ENCODE measurements at regions of chr1 and their contacts with region 1.

Region 1: DNA sequence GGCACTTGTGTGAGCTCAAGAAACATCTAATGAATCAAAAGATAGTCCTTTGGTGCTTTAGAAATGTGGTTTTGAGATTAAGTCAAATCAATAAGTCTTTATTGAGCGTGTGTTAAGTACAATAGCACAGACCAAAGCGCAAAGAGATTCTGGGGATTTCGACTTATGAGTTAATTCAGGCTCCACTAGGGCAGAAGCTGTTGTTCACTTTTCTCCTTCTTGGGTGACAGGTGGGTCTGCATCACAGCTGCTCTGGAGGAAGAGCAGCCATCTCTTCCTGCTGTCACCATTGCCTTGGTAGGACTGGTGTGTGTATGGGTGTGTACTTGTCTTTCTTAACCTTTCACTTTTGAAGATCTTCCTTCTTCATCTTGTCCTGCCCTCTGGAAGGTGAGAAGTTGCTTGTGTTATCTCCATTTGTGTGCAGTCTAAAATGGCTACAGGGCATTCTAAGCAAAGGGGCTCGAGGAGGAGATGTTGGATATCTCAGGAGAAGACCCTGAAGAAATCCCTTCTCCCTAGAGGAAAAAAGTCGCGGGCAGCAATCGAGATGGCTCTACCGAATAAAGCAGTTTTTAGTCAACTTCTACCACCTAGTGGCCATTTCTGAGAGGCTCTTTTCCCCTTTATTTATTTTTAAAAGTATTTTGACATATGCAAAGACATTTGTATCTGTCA is 22.9 kb upstream of the DISC1 start:
- DNase-seq: peak in 7 of 9 experiments; percentile 6 to 73 (median 36)
- ATAC-seq: peak; percentile 89
- H3K4me3 ChIP-seq: peak overlapping the region; percentile 62 to 74
- H3K4me3 Mint-ChIP-seq: peak overlapping the region; percentile 95
- H3K27ac ChIP-seq: peak overlapping the region; percentile 21 to 40
- H3K27ac Mint-ChIP-seq: peak overlapping the region; percentile 89
- H3K4me1 ChIP-seq: peaks cover 4% of the 10 kb centered on the region
- H3K4me1 Mint-ChIP-seq: peaks cover 8% of the 10 kb centered on the region
- H3K27me3 ChIP-seq: no peaks in the 10 kb centered on the region
- H3K27me3 Mint-ChIP-seq: no peaks in the 10 kb centered on the region
- CTCF ChIP-seq: peak; percentile 74

Region 2: DNA sequence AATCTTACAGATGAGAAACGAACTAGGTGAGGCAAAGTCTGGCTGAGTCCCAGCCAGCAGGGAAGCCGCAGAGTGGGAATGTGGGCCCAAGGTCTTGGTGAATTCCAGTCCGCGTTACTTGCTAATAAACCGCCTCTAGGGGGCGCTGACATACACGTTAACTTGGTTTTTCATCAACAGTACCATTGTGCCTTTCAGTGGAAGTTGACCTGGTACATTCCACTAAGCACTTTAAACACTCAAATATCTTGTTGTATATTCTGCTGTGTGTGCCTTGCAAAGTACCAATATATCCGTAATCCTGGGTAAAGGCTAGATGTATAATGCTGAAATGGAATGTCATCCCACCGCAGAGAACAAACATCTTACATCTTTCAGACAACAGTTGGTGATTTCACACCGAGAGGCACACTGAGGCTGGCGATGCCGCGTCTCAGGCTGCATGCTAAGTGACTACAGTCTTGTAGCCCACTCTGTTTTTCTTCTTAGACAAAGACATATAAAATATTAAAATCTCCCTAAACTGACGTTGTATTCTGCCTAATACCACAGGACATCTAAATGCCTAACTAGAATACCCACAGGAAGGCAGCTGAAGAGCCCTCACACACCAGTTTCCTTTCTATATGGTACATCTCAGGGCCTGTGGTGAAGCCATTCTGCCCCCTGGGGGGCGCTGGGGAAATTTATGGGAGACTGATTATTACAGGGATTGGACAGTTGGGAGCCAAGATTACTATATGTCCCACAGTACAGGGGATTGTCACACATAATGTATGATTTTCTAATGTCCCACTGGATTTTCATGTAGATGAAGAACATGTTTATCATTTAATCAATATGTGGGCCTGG is 686.2 kb before region 1 on chr1:
- CTCF ChIA-PET with region 1: no interaction called
- POLR2A ChIA-PET with region 1: no interaction called
- intact Hi-C with region 1: loop called in 1 of 2 experiments (anchors 5 kb)
- DNase-seq: peak; percentile 41 to 86 (median 80)
- ATAC-seq: peak; percentile 65
- H3K4me3 ChIP-seq: no peak overlapping the region
- H3K4me3 Mint-ChIP-seq: no peak overlapping the region
- H3K27ac ChIP-seq: no peak overlapping the region
- H3K27ac Mint-ChIP-seq: no peak overlapping the region
- H3K4me1 ChIP-seq: no peaks in the 10 kb centered on the region
- H3K4me1 Mint-ChIP-seq: no peaks in the 10 kb centered on the region
- H3K27me3 ChIP-seq: no peaks in the 10 kb centered on the region
- H3K27me3 Mint-ChIP-seq: no peaks in the 10 kb centered on the region
- CTCF ChIP-seq: peak; percentile 84

Region 3: DNA sequence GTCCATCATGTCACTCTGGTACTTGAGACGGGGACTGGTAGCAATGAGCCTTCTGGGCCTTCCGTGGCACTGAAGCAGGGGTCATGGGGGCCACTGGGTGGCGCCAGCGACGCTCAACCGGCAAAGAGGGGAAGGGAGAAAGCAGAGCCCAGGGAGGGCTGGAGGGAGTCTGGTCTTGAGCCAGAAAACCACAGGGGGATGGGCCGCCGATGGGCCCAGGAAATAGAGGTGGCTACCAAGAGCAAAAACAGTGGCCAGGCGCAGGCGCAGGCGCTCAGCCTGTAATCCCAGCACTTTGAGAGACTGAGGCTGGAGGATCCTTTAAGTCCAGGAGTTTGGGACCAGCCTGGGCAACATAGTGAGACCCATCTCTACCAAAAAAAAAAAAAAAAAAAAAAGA is 287.9 kb before region 1 on chr1:
- CTCF ChIA-PET with region 1: interaction called, 17 read pairs
- POLR2A ChIA-PET with region 1: no interaction called
- intact Hi-C with region 1: loop called in 1 of 2 experiments (anchors 5 kb)
- DNase-seq: peak in 8 of 9 experiments; percentile 8 to 58 (median 43)
- ATAC-seq: peak; percentile 57
- H3K4me3 ChIP-seq: no peak overlapping the region
- H3K4me3 Mint-ChIP-seq: no peak overlapping the region
- H3K27ac ChIP-seq: no peak overlapping the region
- H3K27ac Mint-ChIP-seq: no peak overlapping the region
- H3K4me1 ChIP-seq: no peaks in the 10 kb centered on the region
- H3K4me1 Mint-ChIP-seq: no peaks in the 10 kb centered on the region
- H3K27me3 ChIP-seq: no peaks in the 10 kb centered on the region
- H3K27me3 Mint-ChIP-seq: no peaks in the 10 kb centered on the region
- CTCF ChIP-seq: peak; percentile 38

Region 4: GRCh38 chr1:231636157-231636556 is 32.4 kb after region 1 on chr1:
- CTCF ChIA-PET with region 1: no interaction called
- POLR2A ChIA-PET with region 1: no interaction called
- intact Hi-C with region 1: no loop called
- DNase-seq: no peak
- ATAC-seq: no peak
- H3K4me3 ChIP-seq: no peak overlapping the region
- H3K4me3 Mint-ChIP-seq: no peak overlapping the region
- H3K27ac ChIP-seq: no peak overlapping the region
- H3K27ac Mint-ChIP-seq: no peak overlapping the region
- H3K4me1 ChIP-seq: no peaks in the 10 kb centered on the region
- H3K4me1 Mint-ChIP-seq: peaks cover 25% of the 10 kb centered on the region
- H3K27me3 ChIP-seq: no peaks in the 10 kb centered on the region
- H3K27me3 Mint-ChIP-seq: no peaks in the 10 kb centered on the region
- CTCF ChIP-seq: no peak

Region 5: DNA sequence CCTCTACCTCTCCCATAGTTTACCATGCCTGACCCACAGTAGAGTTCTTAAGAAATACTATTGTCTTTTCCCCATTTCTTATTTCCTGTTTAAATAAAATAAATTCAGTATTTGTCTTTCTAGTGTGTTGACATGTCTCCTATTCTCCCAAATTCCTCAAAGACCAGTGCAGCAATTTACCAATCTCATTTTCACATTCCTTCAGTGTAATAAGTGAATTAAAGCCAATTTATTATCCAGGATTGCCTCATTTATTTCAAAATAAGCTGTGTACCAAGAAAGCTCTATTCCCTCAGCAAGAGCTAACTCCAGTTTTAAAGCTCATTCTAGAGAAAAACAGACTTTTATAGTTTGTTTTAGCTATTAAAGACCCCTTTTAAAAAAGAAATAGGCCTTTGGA is 72.8 kb after region 1 on chr1:
- CTCF ChIA-PET with region 1: no interaction called
- POLR2A ChIA-PET with region 1: no interaction called
- intact Hi-C with region 1: no loop called
- DNase-seq: no peak
- ATAC-seq: no peak
- H3K4me3 ChIP-seq: no peak overlapping the region
- H3K4me3 Mint-ChIP-seq: no peak overlapping the region
- H3K27ac ChIP-seq: no peak overlapping the region
- H3K27ac Mint-ChIP-seq: no peak overlapping the region
- H3K4me1 ChIP-seq: peaks cover 23% of the 10 kb centered on the region
- H3K4me1 Mint-ChIP-seq: peaks cover 51% of the 10 kb centered on the region
- H3K27me3 ChIP-seq: no peaks in the 10 kb centered on the region
- H3K27me3 Mint-ChIP-seq: no peaks in the 10 kb centered on the region
- CTCF ChIP-seq: no peak

Region 6: GRCh38 chr1:232096751-232097150 is 493.0 kb after region 1 on chr1:
- CTCF ChIA-PET with region 1: no interaction called
- POLR2A ChIA-PET with region 1: no interaction called
- intact Hi-C with region 1: no loop called
- DNase-seq: no peak
- ATAC-seq: no peak
- H3K4me3 ChIP-seq: no peak overlapping the region
- H3K4me3 Mint-ChIP-seq: no peak overlapping the region
- H3K27ac ChIP-seq: no peak overlapping the region
- H3K27ac Mint-ChIP-seq: no peak overlapping the region
- H3K4me1 ChIP-seq: no peaks in the 10 kb centered on the region
- H3K4me1 Mint-ChIP-seq: no peaks in the 10 kb centered on the region
- H3K27me3 ChIP-seq: no peaks in the 10 kb centered on the region
- H3K27me3 Mint-ChIP-seq: peaks cover 11% of the 10 kb centered on the region
- CTCF ChIP-seq: no peak